Ascending aorta (tissue), 2 donors: ENCODE measurements at regions of chr10 and their contacts with region 1.

Region 1: DNA sequence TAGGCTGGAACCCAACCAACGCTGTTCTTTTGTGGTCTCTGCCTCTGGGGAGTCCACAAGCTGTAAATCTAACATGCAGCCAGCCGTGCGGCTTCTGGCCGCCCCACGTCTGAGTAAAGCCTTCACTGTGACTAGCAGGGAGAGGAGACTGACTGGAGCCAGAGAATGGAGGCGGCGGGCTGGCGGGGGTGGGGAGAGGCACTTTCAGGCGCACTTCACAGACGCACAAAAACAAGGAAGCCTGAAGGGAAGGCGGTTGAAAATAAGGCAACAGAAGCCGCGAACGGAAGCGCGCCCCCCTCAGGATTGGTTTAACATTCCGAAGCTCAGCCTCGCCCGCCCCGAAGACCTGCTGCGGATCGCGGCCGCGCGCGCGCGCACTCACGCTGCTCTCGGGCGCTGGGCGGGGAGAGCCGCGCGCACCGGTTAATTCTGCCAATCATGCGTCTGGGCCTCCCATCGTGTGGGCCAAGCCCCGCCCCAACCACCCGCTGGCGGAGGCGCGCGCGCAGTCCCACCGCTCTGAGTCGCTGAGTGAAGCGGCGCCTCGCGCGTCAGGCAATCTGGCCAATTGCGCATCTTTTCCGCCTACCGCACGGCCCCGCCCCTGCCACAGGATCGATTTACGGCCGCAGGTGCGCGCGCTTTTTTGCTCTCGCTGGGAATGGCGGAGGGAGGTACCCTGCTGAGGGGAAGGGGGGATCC is at the start of gene SFR1:
- DNase-seq: peak; percentile 95 to 99
- H3K4me3 ChIP-seq: peak within 1 kb of the TSS; percentile 66 to 70
- H3K27ac ChIP-seq: peak within 1 kb of the TSS; percentile 97 to 98
- H3K4me1 ChIP-seq: peaks cover 0 to 17% of the 10 kb centered on the region in 2 donors
- H3K27me3 ChIP-seq: no peaks in the 10 kb centered on the region
- CTCF ChIP-seq: peak; percentile 53 to 62 (median 53)
- total RNA-seq, gene SFR1: 0.32 TPM

Region 2: DNA sequence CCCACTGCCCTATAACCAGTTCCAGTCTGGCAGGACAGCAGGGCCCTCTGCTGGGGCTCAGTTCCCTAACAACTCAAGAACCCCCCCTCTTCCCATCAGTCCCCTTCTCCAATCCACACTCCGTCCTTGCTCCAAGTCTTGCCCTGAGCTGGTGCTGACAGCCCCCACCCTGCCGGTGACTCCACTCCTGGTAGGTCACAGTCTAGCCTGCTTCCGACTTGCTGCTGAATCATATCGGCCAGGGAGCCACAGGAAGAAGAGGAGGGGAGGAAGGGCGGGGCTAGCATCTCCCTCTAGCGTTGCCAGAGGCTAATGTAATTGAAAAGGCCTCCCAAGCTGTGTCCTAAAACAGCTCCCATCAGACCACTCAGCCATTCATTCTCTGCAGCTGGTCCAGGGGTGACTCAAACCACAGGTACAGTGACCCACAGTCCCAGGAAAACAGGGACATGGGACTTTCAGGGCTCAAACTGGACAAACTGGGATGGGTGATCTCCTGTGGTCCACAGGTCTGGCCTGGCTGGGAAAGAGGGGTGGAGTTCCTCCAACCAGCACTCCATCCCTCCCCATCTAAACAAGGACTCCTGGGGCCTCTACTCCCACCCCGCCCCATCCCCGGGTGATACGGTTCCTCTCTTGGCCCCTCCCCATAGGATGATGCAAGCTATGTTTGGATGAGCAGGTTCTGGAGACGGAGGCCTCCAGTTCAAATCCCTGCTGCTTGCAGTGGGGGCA is 425.1 kb before region 1 on chr10:
- intact Hi-C with region 1: loop called (anchors 10 kb)
- DNase-seq: peak; percentile 41 to 93
- H3K4me3 ChIP-seq: no peak overlapping the region
- H3K27ac ChIP-seq: peak overlapping the region; percentile 76 to 88
- H3K4me1 ChIP-seq: peaks cover 19 to 42% of the 10 kb centered on the region in 2 donors
- H3K27me3 ChIP-seq: no peaks in the 10 kb centered on the region
- CTCF ChIP-seq: peak in 2 of 3 experiments; percentile 23 to 29

Region 3: GRCh38 chr10:103918053-103918846 is 203.4 kb before region 1 on chr10 and contains the start of gene STN1:
- intact Hi-C with region 1: loop called (anchors 1 kb)
- DNase-seq: peak; percentile 87 to 98
- H3K4me3 ChIP-seq: peak within 1 kb of the TSS; percentile 76 to 91
- H3K27ac ChIP-seq: peak within 1 kb of the TSS; percentile 96 to 97
- H3K4me1 ChIP-seq: peaks cover 6 to 16% of the 10 kb centered on the region in 2 donors
- H3K27me3 ChIP-seq: no peaks in the 10 kb centered on the region
- CTCF ChIP-seq: no peak
- total RNA-seq, gene STN1: 24.5 TPM

Region 4: GRCh38 chr10:103958996-103959395 is 162.7 kb before region 1 on chr10:
- intact Hi-C with region 1: no loop called
- DNase-seq: no peak
- H3K4me3 ChIP-seq: no peak overlapping the region
- H3K27ac ChIP-seq: no peak overlapping the region
- H3K4me1 ChIP-seq: no peaks in the 10 kb centered on the region
- H3K27me3 ChIP-seq: no peaks in the 10 kb centered on the region
- CTCF ChIP-seq: no peak

Region 5: DNA sequence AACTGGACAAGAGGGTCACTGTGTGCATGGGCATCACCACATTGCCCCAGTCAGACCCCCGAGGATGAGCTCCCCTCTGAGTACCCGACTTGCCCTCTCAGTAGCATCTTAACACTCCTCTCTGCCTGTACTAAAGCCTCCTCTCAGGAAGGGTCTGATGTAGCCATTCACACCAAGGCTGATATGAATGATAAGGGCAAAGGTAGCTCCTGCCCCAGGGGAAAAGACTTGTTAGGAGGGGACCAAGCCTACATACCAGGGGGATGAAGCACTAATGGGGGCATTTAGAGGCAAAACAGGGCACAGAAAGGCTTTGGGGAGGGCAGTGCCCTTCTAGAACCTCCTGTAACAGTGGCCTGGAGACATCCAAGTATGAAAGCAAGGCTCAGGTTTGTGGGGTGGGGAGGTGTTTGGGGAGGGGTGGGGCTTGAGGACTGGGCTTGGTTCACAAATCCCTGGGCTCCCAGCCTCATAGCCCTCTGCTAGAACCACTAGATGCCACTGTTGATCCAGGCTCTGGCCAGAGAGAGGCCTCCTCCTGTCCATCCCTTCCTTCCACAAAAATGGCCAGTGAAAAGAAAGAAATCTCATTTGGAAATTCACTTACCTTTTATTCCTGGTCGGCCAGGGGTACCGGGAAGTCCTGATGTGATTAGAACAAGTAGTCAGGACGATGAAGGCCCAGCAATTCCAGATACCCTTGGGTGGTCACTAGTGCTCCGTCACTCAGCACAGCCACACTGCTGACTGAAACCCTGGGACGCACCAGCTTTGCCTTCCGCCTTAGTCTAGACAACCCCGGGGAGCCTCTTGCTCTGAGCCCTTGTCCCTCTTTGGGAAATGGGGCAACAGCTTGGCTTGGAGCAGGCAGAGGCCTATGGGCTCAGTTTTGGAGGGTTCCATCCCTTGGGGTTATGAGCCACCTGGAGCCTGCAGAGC is 76.3 kb before region 1 on chr10:
- intact Hi-C with region 1: loop called (anchors 2 kb)
- DNase-seq: peak in 1 of 2 donors; percentile 76
- H3K4me3 ChIP-seq: no peak overlapping the region
- H3K27ac ChIP-seq: no peak overlapping the region
- H3K4me1 ChIP-seq: no peaks in the 10 kb centered on the region
- H3K27me3 ChIP-seq: no peaks in the 10 kb centered on the region
- CTCF ChIP-seq: peak; percentile 38 to 60 (median 42)

Region 6: DNA sequence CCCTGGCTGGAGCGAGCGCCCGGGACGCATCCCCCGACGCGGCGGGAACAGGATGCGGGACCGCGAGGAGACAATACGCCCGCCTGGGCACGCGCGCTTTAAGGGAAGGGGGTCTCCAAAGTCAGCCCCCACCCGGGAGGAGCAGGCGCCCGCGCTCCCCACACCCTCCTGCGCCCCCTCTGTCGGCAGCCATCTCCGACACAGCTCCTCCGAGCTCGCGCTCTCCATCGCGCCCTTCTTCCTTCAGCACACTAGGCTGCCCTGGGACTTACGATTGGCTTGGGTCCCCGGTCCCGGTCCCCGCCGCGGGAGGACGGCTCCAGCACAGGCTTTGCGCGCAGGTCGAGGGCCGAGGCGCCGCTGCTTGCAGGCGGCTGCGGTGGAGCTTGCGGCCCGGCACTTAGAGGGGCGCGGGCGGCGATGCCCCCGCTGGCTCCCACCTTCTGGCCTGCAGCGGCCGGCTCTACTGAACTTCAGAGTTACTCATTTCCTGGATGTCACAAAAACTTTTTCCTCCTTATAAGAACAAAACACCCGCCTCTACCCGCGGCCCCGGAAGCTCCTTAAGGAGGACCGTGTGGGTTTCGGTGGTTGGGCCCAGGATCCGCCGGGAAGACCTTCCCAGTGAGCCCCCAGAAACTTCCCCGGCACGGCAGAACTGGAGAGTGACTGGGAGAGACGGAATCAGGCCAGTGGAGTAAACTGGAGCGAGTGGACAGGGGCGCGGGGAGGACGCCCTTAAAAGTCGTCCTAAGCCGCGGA is 216.5 kb after region 1 on chr10 and contains the start of gene ITPRIP:
- intact Hi-C with region 1: loop called (anchors 5 kb)
- DNase-seq: peak; percentile 54 to 89
- H3K4me3 ChIP-seq: peak within 1 kb of the TSS; percentile 63 to 86
- H3K27ac ChIP-seq: peak within 1 kb of the TSS; percentile 92 to 98
- H3K4me1 ChIP-seq: peaks cover 6 to 44% of the 10 kb centered on the region in 2 donors
- H3K27me3 ChIP-seq: no peaks in the 10 kb centered on the region
- CTCF ChIP-seq: peak; percentile 7 to 17 (median 12)
- total RNA-seq, gene ITPRIP: 51.0 TPM